ENCODE measurements at regions of chr21 and their contacts with region 1.

Region 1: GRCh38 chr21:31098576-31099005 is 60.3 kb upstream of the KRTAP19-8 start:
- DNase-seq: peak; percentile 49
- H3K4me3 ChIP-seq: no peak overlapping the region
- H3K27ac ChIP-seq: no peak overlapping the region
- H3K4me1 ChIP-seq: no peaks in the 10 kb centered on the region
- H3K27me3 ChIP-seq: no peaks in the 10 kb centered on the region
- CTCF ChIP-seq: peak; percentile 78 to 80
- POLR2A ChIP-seq: no peak

Region 2: DNA sequence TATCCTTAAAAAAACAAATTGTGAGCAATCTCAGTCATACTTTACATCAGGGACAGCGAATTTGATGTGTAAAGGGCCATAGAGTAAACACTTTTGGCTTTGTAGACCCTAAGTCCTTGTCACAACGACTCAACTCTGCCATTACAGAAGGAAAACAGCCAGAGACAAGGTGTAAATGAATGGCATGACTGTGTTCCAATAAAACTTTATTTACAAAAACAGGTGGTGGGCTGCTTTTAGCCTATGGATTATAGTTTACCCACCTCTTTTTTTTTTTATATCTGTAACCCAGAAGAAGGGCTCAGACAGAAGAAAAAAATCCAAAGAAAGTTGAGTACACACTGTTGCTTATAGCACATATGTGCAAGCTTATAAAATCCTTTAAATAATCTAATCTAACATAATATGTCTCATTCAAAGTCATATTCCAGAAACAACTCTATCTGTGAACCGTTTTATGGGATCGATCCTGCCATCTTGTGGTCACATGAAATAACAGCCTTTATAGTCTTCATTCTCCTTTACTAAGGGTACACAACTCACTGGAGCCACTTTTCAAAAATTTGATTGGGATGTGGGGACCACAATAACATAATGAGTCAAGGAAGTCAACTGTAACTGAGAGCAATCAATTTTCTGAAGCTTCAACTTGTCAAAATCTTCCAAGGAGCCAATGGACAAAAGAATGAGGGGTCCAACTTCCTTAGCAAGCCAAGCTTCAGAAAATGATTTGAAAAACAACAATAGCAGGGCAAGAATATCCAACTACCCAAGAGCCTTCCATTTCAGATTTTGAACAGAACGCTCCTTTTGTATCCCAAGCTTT is 81.9 kb after region 1 on chr21:
- CTCF ChIA-PET with region 1: interaction called, 31 read pairs
- POLR2A ChIA-PET with region 1: no interaction called
- dilution Hi-C with region 1: no loop called
- intact Hi-C with region 1: loop called (anchors 1 kb)
- DNase-seq: peak; percentile 39
- H3K4me3 ChIP-seq: no peak overlapping the region
- H3K27ac ChIP-seq: no peak overlapping the region
- H3K4me1 ChIP-seq: no peaks in the 10 kb centered on the region
- H3K27me3 ChIP-seq: no peaks in the 10 kb centered on the region
- CTCF ChIP-seq: peak; percentile 20 to 32
- POLR2A ChIP-seq: no peak

Region 3: DNA sequence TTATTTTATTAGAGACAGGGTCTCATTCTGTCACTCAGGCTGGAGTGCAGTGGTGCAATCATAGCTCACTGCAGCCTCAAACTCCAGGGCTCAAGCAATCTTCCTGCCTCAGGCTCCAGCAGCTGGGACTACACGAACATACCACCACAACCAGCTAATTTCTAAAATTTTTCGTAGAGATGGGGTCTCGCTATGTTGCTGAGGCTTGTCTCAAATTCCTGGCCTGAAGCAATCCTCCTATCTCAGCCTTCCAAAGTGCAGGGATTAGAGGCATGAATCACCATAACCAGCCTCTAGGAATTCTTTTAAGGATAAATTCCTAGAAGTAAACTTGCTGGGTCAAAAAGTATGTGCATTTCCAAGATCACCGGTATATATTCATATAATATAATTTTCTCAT is 756.6 kb after region 1 on chr21:
- CTCF ChIA-PET with region 1: no interaction called
- POLR2A ChIA-PET with region 1: no interaction called
- dilution Hi-C with region 1: no loop called
- intact Hi-C with region 1: no loop called
- DNase-seq: no peak
- H3K4me3 ChIP-seq: no peak overlapping the region
- H3K27ac ChIP-seq: no peak overlapping the region
- H3K4me1 ChIP-seq: no peaks in the 10 kb centered on the region
- H3K27me3 ChIP-seq: no peaks in the 10 kb centered on the region
- CTCF ChIP-seq: no peak
- POLR2A ChIP-seq: no peak

Measured in endothelial cell of umbilical vein (primary cell).